ENCODE measurements at regions of chr2 and their contacts with region 1.

Region 1: GRCh38 chr2:207473049-207473930 is 56.5 kb upstream of the CREB1 start:
- DNase-seq: peak in 9 of 14 experiments; percentile 5 to 62 (median 35)
- ATAC-seq: peak; percentile 83
- H3K4me3 ChIP-seq: no peak overlapping the region
- H3K4me3 Mint-ChIP-seq: no peak overlapping the region
- H3K27ac ChIP-seq: no peak overlapping the region
- H3K27ac Mint-ChIP-seq: no peak overlapping the region
- H3K4me1 ChIP-seq: peaks cover 5% of the 10 kb centered on the region
- H3K4me1 Mint-ChIP-seq: peaks cover 24% of the 10 kb centered on the region
- H3K27me3 ChIP-seq: no peaks in the 10 kb centered on the region
- H3K27me3 Mint-ChIP-seq: no peaks in the 10 kb centered on the region
- CTCF ChIP-seq: peak; percentile 41

Region 2: GRCh38 chr2:206561962-206562361 is 911.3 kb before region 1 on chr2:
- CTCF ChIA-PET with region 1: no interaction called
- POLR2A ChIA-PET with region 1: no interaction called
- intact Hi-C with region 1: loop called in 1 of 2 experiments (anchors 5 kb)
- DNase-seq: no peak
- ATAC-seq: no peak
- H3K4me3 ChIP-seq: no peak overlapping the region
- H3K4me3 Mint-ChIP-seq: no peak overlapping the region
- H3K27ac ChIP-seq: no peak overlapping the region
- H3K27ac Mint-ChIP-seq: no peak overlapping the region
- H3K4me1 ChIP-seq: peaks cover 5% of the 10 kb centered on the region
- H3K4me1 Mint-ChIP-seq: peaks cover 32% of the 10 kb centered on the region
- H3K27me3 ChIP-seq: no peaks in the 10 kb centered on the region
- H3K27me3 Mint-ChIP-seq: no peaks in the 10 kb centered on the region
- CTCF ChIP-seq: no peak

Region 3: GRCh38 chr2:206800506-206801417 is 672.5 kb before region 1 on chr2:
- CTCF ChIA-PET with region 1: interaction called, 4 read pairs
- POLR2A ChIA-PET with region 1: interaction called, 4 read pairs
- intact Hi-C with region 1: loop called in 1 of 2 experiments (anchors 1 kb)
- DNase-seq: peak; percentile 13 to 75 (median 32)
- ATAC-seq: peak; percentile 66
- H3K4me3 ChIP-seq: peak overlapping the region; percentile 11
- H3K4me3 Mint-ChIP-seq: peak overlapping the region; percentile 66
- H3K27ac ChIP-seq: no peak overlapping the region
- H3K27ac Mint-ChIP-seq: peak overlapping the region; percentile 32
- H3K4me1 ChIP-seq: peaks cover 6% of the 10 kb centered on the region
- H3K4me1 Mint-ChIP-seq: peaks cover 18% of the 10 kb centered on the region
- H3K27me3 ChIP-seq: no peaks in the 10 kb centered on the region
- H3K27me3 Mint-ChIP-seq: no peaks in the 10 kb centered on the region
- CTCF ChIP-seq: peak; percentile 67

Region 4: GRCh38 chr2:207046724-207047123 is 426.6 kb before region 1 on chr2:
- CTCF ChIA-PET with region 1: no interaction called
- POLR2A ChIA-PET with region 1: no interaction called
- intact Hi-C with region 1: loop called (anchors 1 to 2 kb)
- DNase-seq: peak in 11 of 14 experiments; percentile 3 to 70 (median 12)
- ATAC-seq: peak; percentile 86
- H3K4me3 ChIP-seq: no peak overlapping the region
- H3K4me3 Mint-ChIP-seq: no peak overlapping the region
- H3K27ac ChIP-seq: no peak overlapping the region
- H3K27ac Mint-ChIP-seq: no peak overlapping the region
- H3K4me1 ChIP-seq: peaks cover 6% of the 10 kb centered on the region
- H3K4me1 Mint-ChIP-seq: peaks cover 10% of the 10 kb centered on the region
- H3K27me3 ChIP-seq: no peaks in the 10 kb centered on the region
- H3K27me3 Mint-ChIP-seq: no peaks in the 10 kb centered on the region
- CTCF ChIP-seq: peak; percentile 63

Region 5: GRCh38 chr2:207143215-207144172 is 329.8 kb before region 1 on chr2:
- CTCF ChIA-PET with region 1: interaction called, 6 read pairs
- POLR2A ChIA-PET with region 1: interaction called, 6 read pairs
- intact Hi-C with region 1: loop called (anchors 2 to 5 kb)
- DNase-seq: peak; percentile 35 to 80 (median 60)
- ATAC-seq: peak; percentile 74
- H3K4me3 ChIP-seq: peak overlapping the region; percentile 52
- H3K4me3 Mint-ChIP-seq: peak overlapping the region; percentile 49
- H3K27ac ChIP-seq: peak overlapping the region; percentile 89 to 91
- H3K27ac Mint-ChIP-seq: peak overlapping the region; percentile 89
- H3K4me1 ChIP-seq: peaks cover 43% of the 10 kb centered on the region
- H3K4me1 Mint-ChIP-seq: peaks cover 69% of the 10 kb centered on the region
- H3K27me3 ChIP-seq: no peaks in the 10 kb centered on the region
- H3K27me3 Mint-ChIP-seq: no peaks in the 10 kb centered on the region
- CTCF ChIP-seq: no peak